ENCODE measurements at regions of chr4 and their contacts with region 1.

Region 1: GRCh38 chr4:159446266-159446976 is 343.5 kb downstream of the RAPGEF2 start:
- DNase-seq: peak in 1 of 2 donors; percentile 64
- H3K4me3 ChIP-seq: no peak overlapping the region
- H3K27ac ChIP-seq: no peak overlapping the region
- H3K4me1 ChIP-seq: peaks cover 0 to 2% of the 10 kb centered on the region in 2 donors
- H3K27me3 ChIP-seq: no peaks in the 10 kb centered on the region
- CTCF ChIP-seq: peak; percentile 74 to 90 (median 80)

Region 2: GRCh38 chr4:158722917-158723793 is 723.3 kb before region 1 on chr4 and contains the start of gene PPID:
- intact Hi-C with region 1: loop called (anchors 10 kb)
- DNase-seq: peak; percentile 11 to 90
- H3K4me3 ChIP-seq: peak within 1 kb of the TSS; percentile 68 to 85
- H3K27ac ChIP-seq: peak within 1 kb of the TSS; percentile 84 to 92
- H3K4me1 ChIP-seq: peaks cover 0 to 13% of the 10 kb centered on the region in 2 donors
- H3K27me3 ChIP-seq: no peaks in the 10 kb centered on the region
- CTCF ChIP-seq: no peak
- total RNA-seq, gene PPID: 20.8 TPM

Region 3: DNA sequence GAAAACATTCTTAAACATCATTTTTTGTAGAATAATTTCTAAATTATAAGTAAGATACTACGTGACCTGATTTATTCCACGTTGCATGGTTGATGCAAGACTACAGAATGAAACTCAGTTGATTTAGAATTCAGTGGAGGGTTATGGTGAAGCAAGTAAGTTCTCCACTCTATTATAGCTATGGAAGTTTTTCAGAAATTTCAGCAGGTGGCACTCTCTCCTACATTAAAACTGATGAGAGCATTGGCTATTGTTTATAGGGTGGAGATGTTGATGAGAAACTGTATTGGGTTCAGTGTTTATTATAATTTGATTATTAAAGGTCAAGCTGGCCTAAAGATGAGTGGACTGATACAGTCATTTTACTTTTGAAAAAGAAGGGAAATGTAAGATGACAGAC is 589.6 kb before region 1 on chr4:
- intact Hi-C with region 1: loop called (anchors 5 kb)
- DNase-seq: no peak
- H3K4me3 ChIP-seq: no peak overlapping the region
- H3K27ac ChIP-seq: no peak overlapping the region
- H3K4me1 ChIP-seq: no peaks in the 10 kb centered on the region
- H3K27me3 ChIP-seq: no peaks in the 10 kb centered on the region
- CTCF ChIP-seq: peak; percentile 39 to 56 (median 46)

Region 4: DNA sequence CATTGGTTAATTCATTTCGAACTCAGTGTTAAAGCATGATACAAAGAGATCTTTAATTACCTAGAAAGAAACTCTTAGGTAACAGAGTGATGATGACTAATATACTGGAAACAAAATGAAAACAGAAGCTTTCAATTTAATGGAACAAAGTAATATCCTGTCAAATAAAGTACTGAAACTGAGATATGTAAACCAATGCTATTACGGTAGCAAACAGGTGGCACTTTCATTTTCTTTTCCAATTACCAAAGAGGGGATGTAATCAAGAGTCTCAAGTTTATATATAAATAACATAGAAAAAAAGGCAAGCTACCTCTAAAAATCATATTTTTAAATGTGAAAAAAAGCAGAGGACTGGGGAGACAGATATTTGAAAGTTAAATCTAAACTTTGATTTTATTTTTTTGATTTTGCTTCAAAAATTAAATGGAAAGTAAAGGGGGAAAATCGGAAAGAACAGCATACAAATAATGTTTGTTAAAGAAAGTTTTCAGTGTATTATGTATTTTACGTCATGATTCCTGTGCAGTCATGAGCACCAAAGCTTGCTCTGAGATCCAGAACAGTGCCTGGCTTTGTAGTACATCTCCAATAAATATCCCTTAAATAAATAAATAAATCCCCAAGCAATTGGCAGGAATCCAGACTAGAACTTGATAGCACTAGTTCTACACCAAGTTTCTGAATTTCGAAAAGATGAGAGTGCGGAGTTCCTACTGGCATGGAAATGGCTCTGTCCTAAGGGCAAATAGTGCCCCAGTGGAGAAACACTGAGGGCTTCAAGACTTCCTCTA is 368.5 kb before region 1 on chr4:
- intact Hi-C with region 1: no loop called
- DNase-seq: no peak
- H3K4me3 ChIP-seq: no peak overlapping the region
- H3K27ac ChIP-seq: no peak overlapping the region
- H3K4me1 ChIP-seq: no peaks in the 10 kb centered on the region
- H3K27me3 ChIP-seq: no peaks in the 10 kb centered on the region
- CTCF ChIP-seq: no peak

Region 5: DNA sequence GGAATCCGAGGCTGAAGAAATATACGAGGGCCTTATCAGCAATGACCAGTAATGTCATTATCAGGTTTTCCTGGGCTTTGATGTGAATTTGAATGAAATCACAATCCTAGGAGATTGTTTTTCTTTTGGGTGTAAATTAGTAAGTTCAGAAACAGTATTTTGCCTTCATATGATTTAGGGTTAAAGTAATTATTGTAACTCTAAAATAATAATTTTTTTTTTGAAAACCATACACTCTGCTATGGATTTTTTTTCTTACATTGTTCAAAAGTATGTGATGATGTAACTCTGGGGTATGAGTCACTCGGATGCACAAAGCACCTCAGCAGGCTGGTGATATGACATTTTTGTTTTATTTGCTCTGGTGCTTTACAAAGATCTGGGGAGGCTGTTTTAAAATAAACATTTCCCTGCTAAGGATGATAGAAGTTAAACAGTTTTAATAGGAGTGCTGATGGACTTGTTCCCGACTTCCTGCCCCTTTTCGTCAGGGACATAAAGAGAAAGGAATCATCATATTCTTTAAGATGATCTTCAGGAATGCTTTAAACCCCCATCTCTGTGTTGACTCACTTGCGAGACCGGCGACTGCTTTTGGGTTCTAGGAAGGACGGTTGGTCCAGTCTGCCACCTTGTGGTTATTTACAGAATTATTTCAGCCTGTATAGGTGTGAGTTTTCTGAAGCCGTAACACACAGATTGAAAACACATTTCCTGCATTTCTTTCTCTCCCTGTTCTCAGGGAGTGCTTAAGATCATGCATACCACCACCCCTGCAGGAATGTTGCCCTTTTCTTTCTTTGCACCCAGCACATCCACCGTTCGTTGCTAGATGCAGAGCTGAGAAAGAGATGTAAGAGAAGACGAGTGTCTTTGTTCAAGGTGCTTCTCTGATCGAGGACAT is 271.1 kb before region 1 on chr4:
- intact Hi-C with region 1: loop called (anchors 10 kb)
- DNase-seq: peak in 1 of 2 donors; percentile 79
- H3K4me3 ChIP-seq: peak overlapping the region in 1 of 2 donors; percentile 33
- H3K27ac ChIP-seq: peak overlapping the region in 1 of 2 donors; percentile 44
- H3K4me1 ChIP-seq: peaks cover 6 to 30% of the 10 kb centered on the region in 2 donors
- H3K27me3 ChIP-seq: no peaks in the 10 kb centered on the region
- CTCF ChIP-seq: peak; percentile 75 to 86 (median 80)

Region 6: GRCh38 chr4:159201168-159201567 is 245.3 kb before region 1 on chr4:
- intact Hi-C with region 1: loop called (anchors 5 kb)
- DNase-seq: no peak
- H3K4me3 ChIP-seq: no peak overlapping the region
- H3K27ac ChIP-seq: peak overlapping the region in 1 of 2 donors; percentile 37
- H3K4me1 ChIP-seq: peaks cover 0 to 22% of the 10 kb centered on the region in 2 donors
- H3K27me3 ChIP-seq: no peaks in the 10 kb centered on the region
- CTCF ChIP-seq: no peak

Region 7: DNA sequence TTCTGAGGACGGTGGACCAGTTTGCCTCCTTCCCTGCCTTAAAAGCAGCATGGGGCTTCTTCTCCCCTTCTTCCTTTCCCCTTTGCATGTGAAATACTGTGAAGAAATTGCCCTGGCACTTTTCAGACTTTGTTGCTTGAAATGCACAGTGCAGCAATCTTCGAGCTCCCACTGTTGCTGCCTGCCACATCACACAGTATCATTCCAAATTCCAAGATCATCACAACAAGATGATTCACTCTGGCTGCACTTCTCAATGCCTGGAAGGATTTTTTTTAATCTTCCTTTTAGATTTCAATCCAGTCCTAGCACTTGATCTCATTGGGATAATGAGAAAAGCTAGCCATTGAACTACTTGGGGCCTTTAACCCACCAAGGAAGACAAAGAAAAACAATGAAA is 88.2 kb before region 1 on chr4:
- intact Hi-C with region 1: loop called (anchors 10 kb)
- DNase-seq: no peak
- H3K4me3 ChIP-seq: no peak overlapping the region
- H3K27ac ChIP-seq: peak overlapping the region in 1 of 2 donors; percentile 23
- H3K4me1 ChIP-seq: peaks cover 0 to 9% of the 10 kb centered on the region in 2 donors
- H3K27me3 ChIP-seq: no peaks in the 10 kb centered on the region
- CTCF ChIP-seq: no peak